ENCODE measurements at regions of chr7 and their contacts with region 1.

Region 1: DNA sequence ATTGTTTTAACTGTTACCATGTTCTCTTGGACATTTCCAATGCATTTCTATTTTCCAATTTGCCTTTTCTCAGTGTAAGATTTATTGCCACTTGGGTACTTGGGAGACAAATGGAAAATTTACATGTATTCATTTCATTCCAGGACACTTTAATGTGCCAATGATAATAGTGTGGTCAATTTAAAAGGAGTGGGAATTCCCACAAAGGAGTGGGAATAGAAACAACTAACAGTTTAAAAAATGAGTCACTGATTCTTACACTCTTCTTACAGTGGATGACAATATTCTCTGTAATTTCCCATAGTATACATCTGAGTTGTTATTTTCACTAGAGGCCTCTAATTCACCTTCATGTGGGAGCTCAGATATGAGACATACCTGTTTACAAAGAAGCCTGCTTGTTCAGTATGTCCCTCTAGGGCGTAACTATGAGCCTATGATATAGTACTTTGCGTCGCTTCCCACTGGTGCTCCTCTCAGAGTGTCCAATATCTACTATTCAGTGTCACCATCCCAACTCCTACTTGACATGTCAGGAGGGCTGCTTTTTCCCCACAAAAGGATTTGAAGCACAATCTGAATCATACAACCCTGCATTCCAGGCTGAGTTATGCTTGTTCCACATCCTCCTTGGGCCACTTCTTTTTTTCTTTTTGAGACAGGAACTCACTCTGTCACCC is 301.3 kb downstream of the PHTF2 start:
- DNase-seq: no peak
- ATAC-seq: no peak
- H3K4me3 ChIP-seq: no peak overlapping the region
- H3K27ac ChIP-seq: no peak overlapping the region
- H3K4me1 ChIP-seq: no peaks in the 10 kb centered on the region
- H3K27me3 ChIP-seq: no peaks in the 10 kb centered on the region
- CTCF ChIP-seq: no peak
- POLR2A ChIP-seq: no peak

Region 2: GRCh38 chr7:78164459-78164858 is 64.6 kb after region 1 on chr7:
- intact Hi-C with region 1: loop called in 1 of 10 experiments (anchors 10 kb)
- DNase-seq: no peak
- ATAC-seq: peak in 1 of 4 donors; percentile 36
- H3K4me3 ChIP-seq: no peak overlapping the region
- H3K27ac ChIP-seq: no peak overlapping the region
- H3K4me1 ChIP-seq: no peaks in the 10 kb centered on the region
- H3K27me3 ChIP-seq: no peaks in the 10 kb centered on the region
- CTCF ChIP-seq: no peak
- POLR2A ChIP-seq: no peak

Region 3: DNA sequence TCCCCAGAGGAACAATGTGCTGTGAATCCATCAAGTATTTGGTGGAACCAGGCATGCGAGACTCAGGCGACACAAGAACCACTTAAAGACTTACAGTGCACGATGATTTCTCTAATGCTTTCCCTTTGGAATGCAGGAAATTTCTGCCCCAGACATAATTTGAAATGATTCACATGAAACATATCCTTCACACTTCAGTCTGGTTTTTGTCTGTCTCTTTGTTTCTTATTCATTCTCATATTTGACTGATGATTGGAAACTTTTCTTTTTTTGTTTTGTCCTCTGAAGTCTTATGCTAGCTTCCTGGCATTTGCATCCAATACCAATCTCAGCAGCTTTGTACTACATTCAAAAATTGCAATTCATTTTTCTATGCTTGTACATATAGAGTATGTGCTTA is 201.6 kb after region 1 on chr7:
- intact Hi-C with region 1: no loop called
- DNase-seq: no peak
- ATAC-seq: no peak
- H3K4me3 ChIP-seq: no peak overlapping the region
- H3K27ac ChIP-seq: no peak overlapping the region
- H3K4me1 ChIP-seq: no peaks in the 10 kb centered on the region
- H3K27me3 ChIP-seq: no peaks in the 10 kb centered on the region
- CTCF ChIP-seq: no peak
- POLR2A ChIP-seq: no peak